ENCODE measurements at regions of chr10 and their contacts with region 1.

Region 1: DNA sequence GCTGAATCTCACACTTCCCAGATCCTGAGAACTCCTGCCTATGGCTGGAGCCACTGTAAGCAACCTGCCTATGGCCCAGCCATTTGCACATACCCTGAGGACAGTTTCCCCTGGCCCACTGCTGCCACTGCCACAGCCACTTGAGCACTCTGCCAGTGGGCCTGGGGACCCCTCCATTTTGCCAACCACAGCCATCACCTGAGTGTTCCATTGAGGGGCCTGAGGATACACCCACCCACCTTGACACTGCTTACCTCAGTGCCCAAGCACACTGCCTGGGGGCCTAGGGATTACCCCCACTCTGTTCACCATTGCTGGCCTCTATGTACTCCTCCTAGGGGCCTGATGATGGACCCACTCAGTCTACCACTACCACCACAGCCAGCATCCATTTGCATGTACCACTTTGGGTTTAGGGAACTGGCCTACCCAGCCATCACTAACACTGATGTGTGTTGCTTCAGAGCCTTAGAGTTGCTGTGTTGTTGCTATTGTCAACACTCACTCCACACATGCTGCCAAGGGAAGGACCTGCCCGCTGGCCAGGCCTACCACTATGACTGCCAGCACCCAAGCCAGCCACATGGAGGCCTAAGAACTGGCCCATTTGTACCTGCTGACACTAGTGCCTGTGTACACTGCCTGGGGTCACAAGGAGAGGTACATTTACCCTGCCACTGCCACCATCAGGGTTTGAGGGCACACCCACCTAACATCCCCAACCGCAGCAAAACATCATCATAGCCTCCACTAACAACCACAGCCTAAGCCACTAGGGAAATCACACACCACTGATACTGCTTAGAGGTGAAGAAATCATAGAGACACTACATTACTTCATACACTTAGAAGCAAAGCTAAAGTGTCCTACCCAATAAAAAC is 45.9 kb upstream of the ANTXRL start:
- DNase-seq: peak in 2 of 14 experiments; percentile 23 to 34
- ATAC-seq: no peak
- H3K4me3 ChIP-seq: no peak overlapping the region
- H3K4me3 Mint-ChIP-seq: no peak overlapping the region
- H3K27ac ChIP-seq: no peak overlapping the region
- H3K27ac Mint-ChIP-seq: peak overlapping the region; percentile 30
- H3K4me1 ChIP-seq: peaks cover 14% of the 10 kb centered on the region
- H3K4me1 Mint-ChIP-seq: peaks cover 73% of the 10 kb centered on the region
- H3K27me3 ChIP-seq: no peaks in the 10 kb centered on the region
- H3K27me3 Mint-ChIP-seq: no peaks in the 10 kb centered on the region
- CTCF ChIP-seq: no peak

Region 2: GRCh38 chr10:45373003-45373575 is 867.8 kb before region 1 on chr10:
- CTCF ChIA-PET with region 1: no interaction called
- POLR2A ChIA-PET with region 1: no interaction called
- intact Hi-C with region 1: no loop called
- DNase-seq: peak in 5 of 14 experiments; percentile 29 to 62 (median 36)
- ATAC-seq: peak; percentile 42
- H3K4me3 ChIP-seq: peak overlapping the region; percentile 55
- H3K4me3 Mint-ChIP-seq: peak overlapping the region; percentile 85
- H3K27ac ChIP-seq: no peak overlapping the region
- H3K27ac Mint-ChIP-seq: no peak overlapping the region
- H3K4me1 ChIP-seq: peaks cover 28% of the 10 kb centered on the region
- H3K4me1 Mint-ChIP-seq: peaks cover 21% of the 10 kb centered on the region
- H3K27me3 ChIP-seq: peaks cover 21% of the 10 kb centered on the region in 2 experiments
- H3K27me3 Mint-ChIP-seq: peaks cover 81% of the 10 kb centered on the region
- CTCF ChIP-seq: no peak

Region 3: GRCh38 chr10:46255801-46256747 is 15.1 kb after region 1 on chr10:
- CTCF ChIA-PET with region 1: no interaction called
- POLR2A ChIA-PET with region 1: no interaction called
- intact Hi-C with region 1: no loop called
- DNase-seq: peak; percentile 30 to 66 (median 41)
- ATAC-seq: peak; percentile 76
- H3K4me3 ChIP-seq: no peak overlapping the region
- H3K4me3 Mint-ChIP-seq: peak overlapping the region; percentile 22
- H3K27ac ChIP-seq: no peak overlapping the region
- H3K27ac Mint-ChIP-seq: peak overlapping the region; percentile 48
- H3K4me1 ChIP-seq: peaks cover 6% of the 10 kb centered on the region
- H3K4me1 Mint-ChIP-seq: peaks cover 58% of the 10 kb centered on the region
- H3K27me3 ChIP-seq: no peaks in the 10 kb centered on the region
- H3K27me3 Mint-ChIP-seq: no peaks in the 10 kb centered on the region
- CTCF ChIP-seq: peak; percentile 91

Region 4: DNA sequence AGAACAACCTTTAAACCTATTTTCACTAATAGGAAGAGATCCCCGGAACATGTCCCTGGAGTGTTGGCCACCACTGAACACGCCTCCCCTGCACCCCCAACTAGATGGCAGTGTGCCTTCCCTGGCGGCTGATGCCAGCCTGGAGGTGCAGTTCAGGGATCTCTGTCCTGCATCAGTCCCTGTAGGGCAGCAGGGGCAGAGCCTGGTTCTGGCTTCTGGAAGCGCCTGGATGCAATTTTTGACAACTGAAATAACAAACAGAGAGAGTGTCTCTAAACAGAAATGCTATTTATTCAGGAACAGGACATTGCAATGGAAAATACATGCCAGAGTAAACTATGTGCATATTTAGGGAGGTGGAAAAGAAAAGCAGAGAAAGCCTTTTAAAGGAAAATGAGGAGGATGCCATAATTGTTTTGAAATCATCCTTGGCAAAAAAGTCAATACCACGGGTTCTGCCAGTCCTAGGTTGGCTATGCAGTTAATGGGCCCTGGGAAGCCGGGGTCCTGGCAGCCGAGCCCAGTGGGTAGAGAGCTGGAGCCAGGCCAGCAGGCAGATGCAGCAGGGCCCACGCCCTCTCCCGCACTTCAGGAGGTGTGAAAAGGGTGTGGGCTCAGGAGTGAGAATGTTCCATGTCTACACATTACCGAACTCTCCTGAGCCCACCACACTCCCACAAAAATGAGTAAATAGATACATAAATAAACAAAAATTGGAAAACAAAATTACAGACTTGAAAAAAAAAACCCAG is 64.3 kb after region 1 on chr10:
- CTCF ChIA-PET with region 1: no interaction called
- POLR2A ChIA-PET with region 1: no interaction called
- intact Hi-C with region 1: loop called in 1 of 2 experiments (anchors 5 kb)
- DNase-seq: peak in 1 of 14 experiments; percentile 25
- ATAC-seq: no peak
- H3K4me3 ChIP-seq: no peak overlapping the region
- H3K4me3 Mint-ChIP-seq: no peak overlapping the region
- H3K27ac ChIP-seq: no peak overlapping the region
- H3K27ac Mint-ChIP-seq: no peak overlapping the region
- H3K4me1 ChIP-seq: peaks cover 5% of the 10 kb centered on the region
- H3K4me1 Mint-ChIP-seq: peaks cover 6% of the 10 kb centered on the region
- H3K27me3 ChIP-seq: no peaks in the 10 kb centered on the region
- H3K27me3 Mint-ChIP-seq: no peaks in the 10 kb centered on the region
- CTCF ChIP-seq: no peak

Measured in CD4-positive, alpha-beta T cell (primary cell).